ENCODE measurements at regions of chr7 and their contacts with region 1.

Region 1: GRCh38 chr7:28239823-28240204 is 59.2 kb upstream of the JAZF1 start:
- DNase-seq: peak; percentile 6
- H3K4me3 Mint-ChIP-seq: no peak overlapping the region
- H3K27ac Mint-ChIP-seq: no peak overlapping the region
- H3K4me1 Mint-ChIP-seq: peaks cover 9% of the 10 kb centered on the region
- H3K27me3 Mint-ChIP-seq: peaks cover 48% of the 10 kb centered on the region

Region 2: GRCh38 chr7:28207486-28208158 is 32.2 kb before region 1 on chr7:
- CTCF ChIA-PET with region 1: no interaction called
- intact Hi-C with region 1: loop called (anchors 1 kb)
- DNase-seq: peak; percentile 30
- H3K4me3 Mint-ChIP-seq: no peak overlapping the region
- H3K27ac Mint-ChIP-seq: peak overlapping the region; percentile 43
- H3K4me1 Mint-ChIP-seq: peaks cover 39% of the 10 kb centered on the region
- H3K27me3 Mint-ChIP-seq: peaks cover 7% of the 10 kb centered on the region

Measured in activated naive CD4-positive, alpha-beta T cell treated with anti-CD3 and anti-CD28 coated beads for 36 hours (primary cell).